ENCODE measurements at regions of chr9 and their contacts with region 1.

Region 1: GRCh38 chr9:81689343-81690190 is at the start of gene TLE1:
- DNase-seq: peak; percentile 98 to 100
- ATAC-seq: peak; percentile 84
- total RNA-seq, gene TLE1: 48.6 to 65.8 TPM

Region 2: DNA sequence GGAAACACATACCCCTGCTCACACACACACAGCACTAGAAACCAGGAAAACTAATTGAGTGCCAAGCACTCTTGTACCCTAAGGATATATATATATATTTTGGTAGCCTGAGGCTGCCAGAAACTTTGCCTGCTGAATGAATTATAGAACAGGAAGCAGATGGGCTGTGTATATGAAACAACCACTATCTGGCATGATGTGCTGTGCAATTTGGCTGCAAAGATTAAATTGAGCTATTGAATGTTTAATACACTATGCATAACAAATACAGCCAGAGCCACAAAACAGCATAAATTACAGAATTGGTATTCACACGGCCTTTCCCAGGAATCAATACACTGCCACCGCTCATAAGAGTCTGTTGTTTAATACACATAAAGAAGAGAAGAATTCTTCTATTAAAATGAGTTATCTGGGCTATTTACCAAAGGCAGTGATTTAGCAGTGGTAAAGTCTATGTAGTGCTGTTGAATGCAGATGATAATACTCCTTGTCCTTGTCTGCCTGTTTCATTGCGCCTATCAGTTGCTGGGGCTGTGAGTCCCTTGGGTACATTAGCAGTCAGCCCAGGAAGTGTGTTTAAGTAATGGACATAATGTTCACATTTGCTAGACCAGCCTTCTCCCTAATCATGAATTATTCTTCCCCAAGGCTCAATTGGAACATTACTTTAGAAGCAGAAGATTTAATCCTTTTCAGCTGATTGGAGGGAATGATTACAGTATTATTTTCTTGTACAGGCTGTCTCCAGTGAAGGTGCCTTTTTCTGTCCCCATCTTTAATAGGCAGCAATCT is 294.5 kb before region 1 on chr9:
- intact Hi-C with region 1: loop called in 1 of 2 experiments (anchors 10 kb)
- DNase-seq: no peak
- ATAC-seq: no peak

Region 3: GRCh38 chr9:81529556-81530195 is 159.9 kb before region 1 on chr9:
- intact Hi-C with region 1: loop called in 1 of 2 experiments (anchors 10 kb)
- DNase-seq: no peak
- ATAC-seq: peak; percentile 68

Region 4: DNA sequence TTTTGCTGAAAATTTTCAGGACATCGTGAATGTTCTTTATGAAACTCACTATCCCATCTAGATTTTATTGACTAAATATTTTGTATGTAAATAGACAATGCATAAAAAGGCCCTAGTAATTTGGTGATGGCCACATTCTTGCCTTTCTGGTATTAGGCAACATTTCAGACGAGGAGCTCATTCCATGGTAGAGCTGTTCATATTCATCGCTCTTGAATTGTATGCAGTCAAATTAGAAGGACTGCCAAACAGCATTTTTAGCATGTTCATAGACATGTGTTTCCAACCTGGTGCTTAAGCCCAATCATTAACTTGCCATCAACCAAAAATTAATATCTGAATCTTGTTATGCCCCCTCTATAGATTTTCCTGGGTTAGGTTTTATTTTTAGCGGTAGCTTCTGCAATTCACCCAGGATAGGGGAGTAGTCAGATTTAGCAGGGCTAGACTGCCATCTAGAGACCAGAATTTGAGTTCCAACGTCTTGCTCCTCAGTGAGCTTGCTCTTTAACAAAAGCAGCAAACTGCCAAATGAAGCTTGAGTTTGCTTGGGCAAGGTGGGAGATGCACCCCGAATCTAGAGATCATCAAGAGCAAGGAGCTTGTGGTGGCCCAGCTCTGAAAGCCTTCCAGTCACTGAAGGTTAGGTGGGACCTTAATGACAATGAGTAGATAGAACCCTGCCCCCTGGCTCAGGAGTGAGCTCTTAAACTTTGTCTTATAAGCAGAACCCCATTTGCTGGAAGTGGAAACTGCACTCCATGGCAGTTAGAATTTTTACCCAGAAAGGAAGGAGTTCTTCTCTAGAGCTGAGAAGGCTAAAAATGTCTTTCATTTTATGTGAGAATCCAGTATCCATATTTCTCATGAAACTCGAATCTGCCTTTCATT is 917.2 kb after region 1 on chr9:
- intact Hi-C with region 1: loop called in 1 of 2 experiments (anchors 10 kb)
- DNase-seq: peak in 1 of 2 donors; percentile 26
- ATAC-seq: peak; percentile 90

Measured in left colon (tissue), 2 donors.